ENCODE measurements at regions of chr6 and their contacts with region 1.

Region 1: GRCh38 chr6:132820629-132821381 is 6.4 kb downstream of the RPS12 start:
- DNase-seq: no peak
- H3K4me3 ChIP-seq: no peak overlapping the region
- H3K27ac ChIP-seq: no peak overlapping the region
- H3K4me1 ChIP-seq: peaks cover 0 to 10% (median 4%) of the 10 kb centered on the region in 3 donors
- H3K27me3 ChIP-seq: no peaks in the 10 kb centered on the region
- CTCF ChIP-seq: no peak

Region 2: GRCh38 chr6:133306931-133307330 is 486.1 kb after region 1 on chr6:
- intact Hi-C with region 1: no loop called
- DNase-seq: peak in 1 of 5 donors; percentile 39
- H3K4me3 ChIP-seq: no peak overlapping the region
- H3K27ac ChIP-seq: no peak overlapping the region
- H3K4me1 ChIP-seq: no peaks in the 10 kb centered on the region
- H3K27me3 ChIP-seq: no peaks in the 10 kb centered on the region
- CTCF ChIP-seq: no peak

Region 3: GRCh38 chr6:133512410-133513016 is 691.7 kb after region 1 on chr6:
- intact Hi-C with region 1: loop called (anchors 10 kb)
- DNase-seq: peak in 4 of 5 donors; percentile 59 to 79 (median 63)
- H3K4me3 ChIP-seq: no peak overlapping the region
- H3K27ac ChIP-seq: no peak overlapping the region
- H3K4me1 ChIP-seq: no peaks in the 10 kb centered on the region
- H3K27me3 ChIP-seq: no peaks in the 10 kb centered on the region
- CTCF ChIP-seq: peak; percentile 52

Measured in kidney (tissue), 22 donors.